IMR-90 (cell line): ENCODE measurements at regions of chrX and their contacts with region 1.

Region 1: GRCh38 chrX:16882702-16883486 is 12.7 kb upstream of the RBBP7 start:
- DNase-seq: peak; percentile 64
- ATAC-seq: peak; percentile 90
- H3K4me3 ChIP-seq: peak overlapping the region; percentile 37
- H3K27ac ChIP-seq: no peak overlapping the region
- H3K4me1 ChIP-seq: 0 out of 2 replicates have a peak, but pooled peaks cover 2% of the 10 kb centered on the region
- H3K27me3 ChIP-seq: peaks cover 17% of the 10 kb centered on the region
- CTCF ChIP-seq: peak; percentile 71
- POLR2A ChIP-seq: no peak
- RAD21 ChIP-seq: peak; percentile 58

Region 2: DNA sequence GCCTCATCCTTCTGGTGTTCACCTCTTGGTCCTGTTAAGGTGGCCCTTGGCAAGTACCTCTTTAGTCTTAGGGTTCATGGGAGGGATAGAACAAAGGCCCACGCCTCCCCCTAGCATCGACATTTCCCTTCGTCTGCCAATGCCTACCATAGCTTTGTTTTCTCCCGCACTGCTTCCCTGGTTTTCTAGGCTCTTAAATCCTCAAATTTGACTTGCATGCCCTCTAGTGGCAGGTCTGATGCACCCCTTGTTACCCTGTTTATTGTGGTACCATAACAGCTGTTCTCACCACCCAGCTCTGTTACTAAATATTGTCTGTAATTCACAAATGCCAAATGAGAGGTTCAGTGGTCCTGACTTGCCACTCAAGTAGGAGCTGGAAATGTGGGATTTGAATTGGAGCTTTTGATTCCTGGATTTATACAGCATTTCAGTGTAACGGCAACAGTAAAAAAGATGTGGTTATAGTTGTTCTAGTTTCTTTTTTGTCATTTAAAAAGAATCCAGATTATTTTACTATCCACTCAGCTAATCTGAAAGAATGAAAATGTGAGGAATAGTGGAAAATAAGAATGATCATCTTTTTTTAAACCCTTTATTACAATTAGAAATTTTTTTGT is 163.7 kb after region 1 on chrX:
- CTCF ChIA-PET with region 1: interaction called, 10 read pairs
- POLR2A ChIA-PET with region 1: no interaction called
- dilution Hi-C with region 1: no loop called
- in situ Hi-C with region 1: no loop called
- intact Hi-C with region 1: loop called (anchors 1 kb)
- DNase-seq: peak; percentile 67
- ATAC-seq: peak; percentile 93
- H3K4me3 ChIP-seq: no peak overlapping the region
- H3K27ac ChIP-seq: no peak overlapping the region
- H3K4me1 ChIP-seq: no peaks in the 10 kb centered on the region
- H3K27me3 ChIP-seq: peaks cover 3% of the 10 kb centered on the region
- CTCF ChIP-seq: peak; percentile 72
- POLR2A ChIP-seq: no peak
- RAD21 ChIP-seq: peak; percentile 80

Region 3: DNA sequence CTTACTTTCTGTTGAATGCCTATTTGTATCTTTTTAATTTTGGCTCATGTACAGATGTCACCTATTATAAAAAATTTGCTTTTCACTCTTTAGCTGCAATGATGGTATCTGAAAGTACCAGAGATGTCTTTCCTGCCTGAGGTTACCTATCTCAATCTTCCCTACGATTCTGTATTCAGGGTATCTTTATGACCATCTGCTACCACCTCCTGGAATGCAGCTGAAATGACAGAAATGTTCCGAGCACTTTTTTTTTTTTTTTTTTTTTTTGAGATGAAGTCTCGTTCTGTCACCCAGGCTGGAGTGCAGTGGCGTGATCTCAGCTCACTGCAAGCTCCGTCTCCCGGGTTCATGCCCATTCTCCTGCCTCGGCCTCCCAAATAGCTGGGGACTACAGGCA is 199.9 kb after region 1 on chrX:
- CTCF ChIA-PET with region 1: no interaction called
- POLR2A ChIA-PET with region 1: no interaction called
- dilution Hi-C with region 1: no loop called
- in situ Hi-C with region 1: no loop called
- intact Hi-C with region 1: no loop called
- DNase-seq: no peak
- ATAC-seq: no peak
- H3K4me3 ChIP-seq: no peak overlapping the region
- H3K27ac ChIP-seq: no peak overlapping the region
- H3K4me1 ChIP-seq: peaks cover 2% of the 10 kb centered on the region
- H3K27me3 ChIP-seq: peaks cover 6% of the 10 kb centered on the region
- CTCF ChIP-seq: no peak
- POLR2A ChIP-seq: no peak
- RAD21 ChIP-seq: no peak

Region 4: GRCh38 chrX:17425136-17425535 is 542.2 kb after region 1 on chrX:
- CTCF ChIA-PET with region 1: no interaction called
- POLR2A ChIA-PET with region 1: no interaction called
- dilution Hi-C with region 1: no loop called
- in situ Hi-C with region 1: no loop called
- intact Hi-C with region 1: no loop called
- DNase-seq: peak; percentile 31
- ATAC-seq: no peak; the same call in 1 of the 2 replicates
- H3K4me3 ChIP-seq: no peak overlapping the region
- H3K27ac ChIP-seq: peak overlapping the region; percentile 65; the same call in 1 of the 2 replicates
- H3K4me1 ChIP-seq: peaks cover 2% of the 10 kb centered on the region; the same call in 1 of the 2 replicates
- H3K27me3 ChIP-seq: peaks cover 3% of the 10 kb centered on the region
- CTCF ChIP-seq: no peak
- POLR2A ChIP-seq: no peak
- RAD21 ChIP-seq: no peak